Activated CD4-positive, alpha-beta T cell treated with anti-CD3 and anti-CD28 coated beads for 36 hours (primary cell): ENCODE measurements at regions of chr14 and their contacts with region 1.

Region 1: DNA sequence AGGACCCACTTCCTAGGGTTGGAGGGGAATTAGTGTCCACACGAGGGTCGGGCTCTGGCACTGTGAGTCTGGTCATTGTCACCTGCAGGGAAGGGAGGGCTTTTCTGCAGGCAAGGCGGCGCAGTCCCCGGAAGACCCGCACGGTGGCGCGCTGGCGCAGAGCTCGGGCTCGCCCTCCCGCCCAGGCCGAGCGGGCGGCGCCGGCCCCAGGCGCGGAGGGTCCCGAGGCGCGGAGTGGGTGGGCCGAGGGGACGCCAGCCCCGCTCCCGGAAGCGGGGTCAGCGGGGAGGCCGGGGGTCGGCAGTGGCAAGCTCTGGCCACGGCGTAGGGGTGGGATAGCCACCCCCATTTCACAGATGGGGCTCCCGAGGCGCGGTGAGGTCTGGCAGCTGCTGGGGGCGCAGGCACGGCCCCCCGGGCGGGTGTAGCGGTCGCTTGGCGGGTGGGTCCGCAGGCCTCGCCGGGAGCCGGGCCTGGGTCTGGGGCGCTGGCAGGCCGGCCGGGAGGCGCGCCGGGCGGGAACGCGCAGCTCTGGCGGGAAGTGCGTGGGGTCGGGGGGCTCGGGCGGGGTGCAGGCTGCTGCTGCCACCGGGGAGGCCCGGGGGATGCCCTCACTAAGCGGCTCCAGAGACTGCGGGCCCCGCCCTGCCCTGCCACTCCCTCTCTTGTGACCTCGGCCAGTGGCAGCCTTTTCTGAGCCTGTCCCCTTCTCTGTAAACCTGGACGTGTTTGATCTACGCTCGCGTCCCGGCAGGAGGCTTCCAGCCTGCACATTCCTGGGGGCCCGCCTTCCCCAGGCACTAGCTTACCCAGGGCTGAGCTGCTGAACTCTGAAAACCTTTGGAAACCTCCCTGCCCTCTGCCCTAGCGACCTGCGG is 46.1 kb downstream of the CYP46A1 start:
- DNase-seq: peak; percentile 85
- ATAC-seq: peak; percentile 90
- H3K4me3 Mint-ChIP-seq: peak overlapping the region; percentile 30
- H3K27ac Mint-ChIP-seq: no peak overlapping the region
- H3K4me1 Mint-ChIP-seq: no peaks in the 10 kb centered on the region
- H3K27me3 Mint-ChIP-seq: peaks cover 20% of the 10 kb centered on the region

Region 2: GRCh38 chr14:99740411-99740810 is 10.2 kb after region 1 on chr14:
- CTCF ChIA-PET with region 1: interaction called, 10 read pairs
- POLR2A ChIA-PET with region 1: no interaction called
- intact Hi-C with region 1: no loop called
- DNase-seq: no peak
- ATAC-seq: no peak
- H3K4me3 Mint-ChIP-seq: no peak overlapping the region
- H3K27ac Mint-ChIP-seq: no peak overlapping the region
- H3K4me1 Mint-ChIP-seq: no peaks in the 10 kb centered on the region
- H3K27me3 Mint-ChIP-seq: peaks cover 20% of the 10 kb centered on the region

Region 3: GRCh38 chr14:99749142-99749541 is 18.9 kb after region 1 on chr14:
- CTCF ChIA-PET with region 1: interaction called, 10 read pairs
- POLR2A ChIA-PET with region 1: no interaction called
- intact Hi-C with region 1: no loop called
- DNase-seq: no peak
- ATAC-seq: no peak
- H3K4me3 Mint-ChIP-seq: no peak overlapping the region
- H3K27ac Mint-ChIP-seq: no peak overlapping the region
- H3K4me1 Mint-ChIP-seq: peaks cover 19% of the 10 kb centered on the region
- H3K27me3 Mint-ChIP-seq: peaks cover 20% of the 10 kb centered on the region

Region 4: DNA sequence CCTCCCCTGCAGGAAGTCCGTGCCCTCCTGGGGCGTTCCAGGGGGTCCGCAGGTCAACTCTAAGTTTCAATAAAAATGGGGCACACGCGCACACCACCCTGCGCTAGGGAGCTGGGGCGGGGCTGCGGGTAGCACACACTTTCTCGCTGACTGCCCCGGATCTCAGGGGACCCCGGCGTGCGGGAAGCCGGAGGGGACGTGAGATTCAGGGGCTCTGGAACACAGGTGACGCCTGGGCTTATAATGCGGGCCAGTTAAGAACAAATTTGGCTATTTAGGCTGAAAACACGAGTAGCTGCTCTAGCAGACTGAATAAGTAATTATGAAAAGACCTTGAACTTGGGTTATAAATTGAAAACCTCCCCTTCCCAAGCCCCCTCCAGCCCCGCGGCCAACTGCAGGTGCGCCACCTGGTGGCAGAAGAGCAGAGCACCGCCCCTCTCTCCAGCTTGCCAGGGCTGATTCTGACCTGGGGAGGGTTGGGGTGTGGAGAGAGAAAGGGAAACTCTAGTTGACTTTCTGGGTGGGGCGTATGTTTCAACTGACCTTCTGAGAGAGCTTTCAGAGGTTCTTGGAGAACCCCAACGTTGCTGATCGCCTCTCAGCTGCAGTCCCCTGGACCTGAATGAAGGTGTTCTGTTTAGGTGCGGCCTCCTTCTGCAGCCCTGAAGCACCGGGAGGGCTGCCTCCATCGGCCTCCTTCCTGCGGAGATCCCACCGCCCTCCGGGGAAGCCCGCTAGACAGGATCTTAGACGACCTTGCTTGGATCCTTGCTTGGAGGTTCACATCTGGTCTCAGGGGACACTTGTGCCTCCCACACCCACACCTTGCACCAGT is 216.6 kb after region 1 on chr14:
- CTCF ChIA-PET with region 1: interaction called, 6 read pairs
- POLR2A ChIA-PET with region 1: no interaction called
- intact Hi-C with region 1: loop called in 1 of 2 experiments (anchors 5 kb)
- DNase-seq: peak; percentile 73
- ATAC-seq: peak; percentile 79
- H3K4me3 Mint-ChIP-seq: peak overlapping the region; percentile 4
- H3K27ac Mint-ChIP-seq: no peak overlapping the region
- H3K4me1 Mint-ChIP-seq: peaks cover 13% of the 10 kb centered on the region
- H3K27me3 Mint-ChIP-seq: peaks cover 15% of the 10 kb centered on the region